ENCODE measurements at regions of chr6 and their contacts with region 1.

Region 1: DNA sequence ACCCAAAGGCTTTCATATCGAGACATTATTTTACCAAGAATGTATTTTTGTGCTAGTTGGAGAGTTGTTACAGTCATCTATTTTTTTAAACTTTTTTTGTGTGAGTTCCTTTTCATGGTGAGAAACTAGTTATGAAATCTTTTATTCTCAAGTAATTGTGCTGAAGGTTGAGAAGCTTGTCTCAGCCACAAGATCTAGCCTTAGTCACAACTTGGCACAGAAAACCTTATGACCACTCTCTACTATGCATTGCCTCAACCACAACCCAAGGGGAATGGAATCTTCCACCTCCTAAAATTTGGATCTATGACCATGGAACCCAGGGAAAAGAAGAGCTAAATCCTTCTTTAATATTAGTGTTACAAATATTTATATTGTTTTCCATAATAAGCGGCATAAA is 58.5 kb downstream of the HS3ST5 start:
- DNase-seq: peak; percentile 33
- H3K4me3 ChIP-seq: no peak overlapping the region
- H3K27ac ChIP-seq: no peak overlapping the region
- H3K4me1 ChIP-seq: no peaks in the 10 kb centered on the region
- H3K27me3 ChIP-seq: peaks cover 8% of the 10 kb centered on the region; the same call in 1 of the 2 replicates

Region 2: GRCh38 chr6:113994918-113995342 is 289.4 kb before region 1 on chr6:
- in situ Hi-C with region 1: loop called (anchors 25 kb)
- DNase-seq: peak; percentile 92
- H3K4me3 ChIP-seq: peak overlapping the region; percentile 29
- H3K27ac ChIP-seq: peak overlapping the region; percentile 73
- H3K4me1 ChIP-seq: peaks cover 32% of the 10 kb centered on the region
- H3K27me3 ChIP-seq: no peaks in the 10 kb centered on the region

Measured in GM23248 (cell line).